ENCODE measurements at regions of chr3 and their contacts with region 1.

Region 1: GRCh38 chr3:45037734-45038455 is 11.8 kb downstream of the CLEC3B start:
- DNase-seq: peak; percentile 92
- H3K4me3 ChIP-seq: no peak overlapping the region
- H3K27ac ChIP-seq: peak overlapping the region; percentile 33
- H3K4me1 ChIP-seq: peaks cover 21% of the 10 kb centered on the region
- H3K27me3 ChIP-seq: no peaks in the 10 kb centered on the region
- CTCF ChIP-seq: peak; percentile 98

Region 2: DNA sequence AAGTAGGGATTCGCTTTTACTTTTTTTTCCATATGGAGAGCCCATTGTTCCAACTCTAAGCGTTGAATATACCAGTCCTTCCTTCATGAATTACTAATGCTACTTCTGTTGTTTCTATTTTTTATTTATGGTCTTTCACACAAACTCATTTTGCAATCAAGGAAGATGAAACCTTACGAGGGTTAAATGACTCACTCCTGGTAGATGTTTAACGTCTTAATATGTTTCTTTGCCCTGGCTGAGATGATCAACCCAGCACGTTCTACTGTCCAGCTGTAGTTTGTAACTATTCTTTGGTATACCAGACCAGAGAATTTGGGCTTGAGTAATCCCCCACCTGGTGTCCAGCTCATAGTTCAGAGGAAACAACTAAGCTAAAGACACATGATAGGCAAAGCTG is 85.1 kb after region 1 on chr3:
- CTCF ChIA-PET with region 1: interaction called, 10 read pairs
- dilution Hi-C with region 1: no loop called
- in situ Hi-C with region 1: no loop called
- intact Hi-C with region 1: loop called (anchors 5 kb)
- DNase-seq: peak; percentile 94
- H3K4me3 ChIP-seq: no peak overlapping the region
- H3K27ac ChIP-seq: peak overlapping the region; percentile 97
- H3K4me1 ChIP-seq: peaks cover 87% of the 10 kb centered on the region
- H3K27me3 ChIP-seq: no peaks in the 10 kb centered on the region
- CTCF ChIP-seq: no peak

Region 3: GRCh38 chr3:45491344-45491743 is 453.4 kb after region 1 on chr3:
- CTCF ChIA-PET with region 1: no interaction called
- dilution Hi-C with region 1: no loop called
- in situ Hi-C with region 1: loop called (anchors 5 kb)
- intact Hi-C with region 1: no loop called
- DNase-seq: peak; percentile 73
- H3K4me3 ChIP-seq: no peak overlapping the region
- H3K27ac ChIP-seq: peak overlapping the region; percentile 12
- H3K4me1 ChIP-seq: peaks cover 50% of the 10 kb centered on the region
- H3K27me3 ChIP-seq: no peaks in the 10 kb centered on the region
- CTCF ChIP-seq: no peak

Region 4: GRCh38 chr3:45593708-45594609 is 556.1 kb after region 1 on chr3:
- CTCF ChIA-PET with region 1: no interaction called
- dilution Hi-C with region 1: no loop called
- in situ Hi-C with region 1: no loop called
- intact Hi-C with region 1: loop called (anchors 5 kb)
- DNase-seq: peak; percentile 70
- H3K4me3 ChIP-seq: peak overlapping the region; percentile 45 to 56 (median 54)
- H3K27ac ChIP-seq: peak overlapping the region; percentile 63
- H3K4me1 ChIP-seq: peaks cover 42% of the 10 kb centered on the region
- H3K27me3 ChIP-seq: no peaks in the 10 kb centered on the region
- CTCF ChIP-seq: no peak

Region 5: GRCh38 chr3:45832691-45833090 is 794.8 kb after region 1 on chr3:
- CTCF ChIA-PET with region 1: no interaction called
- dilution Hi-C with region 1: no loop called
- in situ Hi-C with region 1: no loop called
- intact Hi-C with region 1: loop called (anchors 5 kb)
- DNase-seq: peak; percentile 38
- H3K4me3 ChIP-seq: no peak overlapping the region
- H3K27ac ChIP-seq: no peak overlapping the region
- H3K4me1 ChIP-seq: no peaks in the 10 kb centered on the region
- H3K27me3 ChIP-seq: no peaks in the 10 kb centered on the region
- CTCF ChIP-seq: peak; percentile 49 to 72